ENCODE measurements at regions of chr20 and their contacts with region 1.

Region 1: GRCh38 chr20:40073535-40074111 is 615.4 kb downstream of the MAFB start:
- DNase-seq: no peak
- ATAC-seq: no peak
- H3K4me3 ChIP-seq: no peak overlapping the region
- H3K27ac ChIP-seq: no peak overlapping the region
- H3K4me1 ChIP-seq: no peaks in the 10 kb centered on the region
- H3K27me3 ChIP-seq: no peaks in the 10 kb centered on the region
- CTCF ChIP-seq: no peak

Region 2: GRCh38 chr20:40806929-40807820 is 733.6 kb after region 1 on chr20:
- intact Hi-C with region 1: loop called in 1 of 2 experiments (anchors 10 kb)
- DNase-seq: no peak
- ATAC-seq: no peak
- H3K4me3 ChIP-seq: no peak overlapping the region
- H3K27ac ChIP-seq: no peak overlapping the region
- H3K4me1 ChIP-seq: no peaks in the 10 kb centered on the region
- H3K27me3 ChIP-seq: peaks cover 0 to 20% of the 10 kb centered on the region in 2 donors
- CTCF ChIP-seq: no peak